ENCODE measurements at regions of chr16 and their contacts with region 1.

Region 1: GRCh38 chr16:66483689-66484481 is 56.8 kb downstream of the BEAN1 start:
- DNase-seq: peak in 1 of 2 donors; percentile 82
- H3K4me3 ChIP-seq: no peak overlapping the region
- H3K27ac ChIP-seq: no peak overlapping the region
- H3K4me1 ChIP-seq: peaks cover 8 to 20% of the 10 kb centered on the region in 2 donors
- H3K27me3 ChIP-seq: no peaks in the 10 kb centered on the region
- CTCF ChIP-seq: peak; percentile 72 to 91 (median 88)

Region 2: GRCh38 chr16:65445313-65446260 is 1038.3 kb before region 1 on chr16:
- intact Hi-C with region 1: no loop called
- DNase-seq: no peak
- H3K4me3 ChIP-seq: no peak overlapping the region
- H3K27ac ChIP-seq: no peak overlapping the region
- H3K4me1 ChIP-seq: no peaks in the 10 kb centered on the region
- H3K27me3 ChIP-seq: no peaks in the 10 kb centered on the region
- CTCF ChIP-seq: no peak

Region 3: DNA sequence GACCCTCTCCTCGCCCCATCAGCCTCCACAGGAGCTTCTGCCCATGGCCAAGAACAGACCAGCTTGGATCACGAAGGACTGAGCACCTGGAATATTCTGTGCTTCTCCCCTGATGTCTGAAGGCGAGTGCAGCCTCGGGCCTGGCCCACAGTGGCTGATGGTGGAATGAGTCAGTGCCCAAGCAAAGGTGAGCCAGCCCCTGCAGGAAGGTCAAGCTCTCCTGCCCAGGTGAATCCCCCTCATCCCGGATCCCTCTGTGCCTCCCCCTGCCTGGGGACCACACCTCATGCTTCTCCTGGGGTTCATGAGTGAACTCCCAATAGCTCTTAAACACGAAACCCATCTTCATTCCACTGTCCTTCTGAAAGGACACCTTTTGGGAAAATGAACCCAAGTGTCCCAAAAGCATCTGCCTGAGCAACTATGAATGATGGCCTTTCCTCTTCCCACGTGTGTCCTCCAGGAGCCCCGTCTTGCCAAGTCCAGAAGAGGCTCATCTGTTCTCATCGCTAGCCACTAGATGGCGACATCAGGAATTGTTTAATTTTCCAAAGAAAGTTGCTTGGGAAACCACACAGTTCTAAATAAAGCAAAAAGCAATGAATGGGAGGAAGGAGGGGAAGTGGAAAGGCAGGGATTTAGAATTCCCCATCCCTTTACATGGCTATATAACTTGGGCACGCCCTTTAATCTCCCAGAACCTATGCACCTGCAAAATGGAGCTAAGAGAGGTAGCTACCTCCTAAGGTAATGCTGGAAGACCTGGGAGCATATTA is 126.5 kb before region 1 on chr16:
- intact Hi-C with region 1: loop called (anchors 5 kb)
- DNase-seq: peak in 1 of 2 donors; percentile 77
- H3K4me3 ChIP-seq: no peak overlapping the region
- H3K27ac ChIP-seq: no peak overlapping the region
- H3K4me1 ChIP-seq: peaks cover 0 to 2% of the 10 kb centered on the region in 2 donors
- H3K27me3 ChIP-seq: no peaks in the 10 kb centered on the region
- CTCF ChIP-seq: peak; percentile 37 to 77 (median 69)

Region 4: DNA sequence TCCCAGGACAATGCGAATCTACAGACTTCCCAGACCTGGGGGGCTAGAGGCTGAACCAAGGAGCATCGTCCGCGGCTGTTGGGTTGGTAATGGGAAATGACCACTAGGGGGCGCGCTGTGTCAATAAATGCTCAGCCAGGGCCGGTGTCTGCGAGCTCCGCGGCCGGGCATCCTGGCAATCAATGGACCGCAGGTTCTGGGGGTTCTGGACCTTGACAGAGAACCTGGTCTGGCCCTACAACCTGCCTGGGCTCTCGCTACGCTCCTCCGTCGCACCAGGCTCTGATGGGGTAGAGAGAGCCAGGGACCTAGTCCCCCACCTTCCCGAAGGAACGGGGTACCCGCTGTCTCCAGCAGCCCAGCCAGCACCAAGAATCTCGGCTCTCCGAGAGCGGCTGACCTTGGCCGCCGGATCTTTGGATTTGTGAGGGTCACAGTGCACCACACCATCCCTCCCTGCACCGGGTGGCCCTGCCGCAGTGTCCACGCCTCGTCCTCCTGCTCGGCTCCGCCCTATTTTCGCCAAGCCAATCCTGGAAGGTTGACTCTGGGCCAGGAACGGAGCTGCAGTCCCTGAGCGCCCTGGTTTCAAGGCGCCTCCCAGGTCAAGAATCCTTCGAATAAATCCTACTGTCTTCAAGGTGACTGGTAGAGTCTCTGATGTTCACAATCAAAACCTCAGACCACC is 77.2 kb before region 1 on chr16:
- intact Hi-C with region 1: loop called (anchors 1 kb)
- DNase-seq: peak in 1 of 2 donors; percentile 92
- H3K4me3 ChIP-seq: peak overlapping the region; percentile 65 to 69
- H3K27ac ChIP-seq: no peak overlapping the region
- H3K4me1 ChIP-seq: peaks cover 0 to 5% of the 10 kb centered on the region in 2 donors
- H3K27me3 ChIP-seq: no peaks in the 10 kb centered on the region
- CTCF ChIP-seq: peak; percentile 82 to 91 (median 87)

Region 5: DNA sequence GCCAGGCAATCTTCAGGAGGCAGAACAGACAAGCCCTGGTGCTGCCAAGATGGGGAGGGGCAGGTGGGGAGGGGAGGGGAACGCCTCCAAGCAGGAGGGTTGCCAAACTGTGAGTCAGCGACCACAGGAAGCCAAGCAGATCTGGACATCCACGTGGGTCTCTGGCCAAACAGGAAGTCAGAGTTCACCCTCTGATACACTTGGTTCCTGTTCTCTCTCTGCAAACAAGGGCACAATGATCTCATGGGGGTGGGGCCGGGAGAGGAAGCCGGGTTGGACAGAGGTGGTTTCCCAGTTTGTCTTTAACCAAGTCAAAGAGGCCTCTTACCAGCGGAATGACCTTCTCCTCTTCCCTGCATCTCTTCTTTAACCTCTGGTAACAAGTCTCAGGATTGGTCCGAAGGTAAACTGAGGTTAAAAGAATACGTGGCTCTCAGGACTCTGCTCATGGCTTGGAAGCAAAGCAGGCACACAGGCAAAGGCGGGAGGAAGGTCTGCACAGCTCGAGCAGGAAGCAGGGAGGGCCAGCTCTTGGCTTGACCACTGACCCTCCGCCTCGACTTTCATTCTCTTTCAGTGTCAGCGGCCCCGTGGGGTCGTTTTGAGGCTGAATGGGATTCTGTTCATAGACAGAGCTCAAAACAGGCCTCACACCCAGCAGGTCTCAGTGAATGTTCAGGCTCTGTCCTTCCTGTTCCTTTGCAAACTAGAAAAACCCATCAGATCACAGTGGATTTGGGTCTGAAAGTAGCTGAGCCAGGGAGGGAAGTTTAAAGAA is 33.1 kb after region 1 on chr16:
- intact Hi-C with region 1: loop called (anchors 2 kb)
- DNase-seq: peak; percentile 94 to 99
- H3K4me3 ChIP-seq: peak overlapping the region; percentile 20 to 36
- H3K27ac ChIP-seq: peak overlapping the region; percentile 98 to 99
- H3K4me1 ChIP-seq: peaks cover 26 to 63% of the 10 kb centered on the region in 2 donors
- H3K27me3 ChIP-seq: no peaks in the 10 kb centered on the region
- CTCF ChIP-seq: no peak

Region 6: DNA sequence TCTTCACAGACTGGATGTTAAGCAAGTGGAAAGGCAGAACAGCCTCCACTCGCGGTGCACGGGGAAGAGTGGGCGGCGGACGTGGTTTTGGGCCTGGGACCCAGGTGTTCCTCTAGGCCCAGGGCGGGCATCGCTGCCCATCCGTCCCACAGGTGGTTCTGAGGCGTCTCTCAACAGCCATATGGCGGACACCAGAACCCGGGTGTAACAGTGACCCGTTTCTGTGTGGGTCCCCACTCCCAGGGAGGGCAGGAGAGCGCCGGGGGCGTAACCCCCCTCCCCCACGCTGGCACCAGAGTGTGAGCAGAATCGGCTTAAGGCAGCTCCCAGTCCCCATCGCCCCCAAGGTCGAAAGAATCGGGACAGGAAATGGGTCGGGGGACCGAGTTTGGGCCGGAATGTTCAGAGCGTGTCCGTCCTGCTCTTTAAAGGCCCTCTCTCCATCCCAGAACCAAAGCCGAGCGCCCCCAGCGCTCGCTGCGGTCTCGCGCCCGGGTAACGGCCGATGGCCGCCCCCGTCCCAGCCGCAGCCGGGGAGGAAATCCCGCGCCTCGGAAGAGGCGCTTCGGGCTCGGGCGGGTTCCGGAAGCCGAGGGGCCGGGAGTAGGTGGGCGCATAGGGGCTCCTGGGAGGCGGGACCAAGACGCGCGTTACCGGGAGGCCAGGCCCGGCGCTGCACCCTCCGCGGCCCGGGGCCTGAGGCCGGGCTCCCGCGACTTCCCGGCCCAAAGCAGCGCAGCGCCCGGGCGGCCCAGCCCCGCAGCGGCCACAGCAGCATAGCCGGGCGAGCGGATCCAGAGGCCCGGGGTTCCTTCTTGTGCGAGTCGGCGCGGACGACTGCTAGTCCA is 65.6 kb after region 1 on chr16 and contains the start of gene TK2:
- intact Hi-C with region 1: loop called (anchors 2 kb)
- DNase-seq: peak in 1 of 2 donors; percentile 85
- H3K4me3 ChIP-seq: peak within 1 kb of the TSS; percentile 90 to 98
- H3K27ac ChIP-seq: peak within 1 kb of the TSS; percentile 94 to 99
- H3K4me1 ChIP-seq: peaks cover 11 to 24% of the 10 kb centered on the region in 2 donors
- H3K27me3 ChIP-seq: no peaks in the 10 kb centered on the region
- CTCF ChIP-seq: peak in 2 of 3 experiments; percentile 15 to 25
- total RNA-seq, gene TK2: 21.5 TPM